GM12878 (cell line): ENCODE measurements at regions of chrX and their contacts with region 1.

Region 1: GRCh38 chrX:3713225-3713936 is at the start of gene PRKX:
- DNase-seq: peak; percentile 13
- ATAC-seq: peak; percentile 86
- H3K4me3 ChIP-seq: peak within 1 kb of the TSS; percentile 83
- H3K27ac ChIP-seq: peak within 1 kb of the TSS; percentile 81
- H3K4me1 ChIP-seq: peaks cover 5% of the 10 kb centered on the region
- H3K27me3 ChIP-seq: no peaks in the 10 kb centered on the region
- CTCF ChIP-seq: no peak
- EP300 ChIP-seq: no peak
- POLR2A ChIP-seq: peak; percentile 81
- RAD21 ChIP-seq: no peak
- polyA plus RNA-seq, gene PRKX: 3.9 to 5.4 TPM

Region 2: DNA sequence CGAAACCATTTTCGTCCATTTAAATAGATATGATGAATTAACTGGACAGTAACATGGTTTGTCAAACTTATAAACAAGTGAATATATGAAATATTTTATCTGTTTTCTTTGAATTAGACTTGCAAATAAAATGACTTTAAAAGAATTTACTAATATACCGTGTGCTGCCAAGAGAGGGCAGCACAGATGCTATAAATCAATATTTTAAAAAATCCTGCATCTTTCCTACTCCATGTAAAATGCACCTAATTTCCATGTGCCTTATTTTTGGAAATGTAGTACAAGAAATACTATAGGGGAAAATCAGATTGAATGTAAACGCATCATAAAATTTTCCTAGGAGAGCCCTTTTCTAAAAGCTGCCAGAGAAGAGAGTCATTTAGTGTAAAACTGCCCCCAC is 62.1 kb before region 1 on chrX:
- CTCF ChIA-PET with region 1: interaction called, 14 read pairs
- POLR2A ChIA-PET with region 1: no interaction called
- RAD21 ChIA-PET with region 1: interaction called, 4 read pairs
- SMC1A ChIA-PET with region 1: interaction called, 7 read pairs
- in situ Hi-C with region 1: no loop called
- intact Hi-C with region 1: loop called (anchors 5 kb)
- DNase-seq: no peak
- ATAC-seq: peak; percentile 45; the same call in 1 of the 3 replicates
- H3K4me3 ChIP-seq: no peak overlapping the region
- H3K27ac ChIP-seq: no peak overlapping the region
- H3K4me1 ChIP-seq: no peaks in the 10 kb centered on the region
- H3K27me3 ChIP-seq: no peaks in the 10 kb centered on the region
- CTCF ChIP-seq: peak; percentile 46 to 63 (median 55); a peak in 5 of 6 replicates
- EP300 ChIP-seq: no peak
- POLR2A ChIP-seq: no peak
- RAD21 ChIP-seq: peak; percentile 65

Region 3: GRCh38 chrX:3659761-3660160 is 53.6 kb before region 1 on chrX:
- CTCF ChIA-PET with region 1: no interaction called
- POLR2A ChIA-PET with region 1: interaction called, 4 read pairs
- RAD21 ChIA-PET with region 1: no interaction called
- SMC1A ChIA-PET with region 1: no interaction called
- in situ Hi-C with region 1: no loop called
- intact Hi-C with region 1: loop called (anchors 5 kb)
- DNase-seq: no peak
- ATAC-seq: no peak
- H3K4me3 ChIP-seq: no peak overlapping the region
- H3K27ac ChIP-seq: no peak overlapping the region
- H3K4me1 ChIP-seq: peaks cover 6% of the 10 kb centered on the region
- H3K27me3 ChIP-seq: no peaks in the 10 kb centered on the region
- CTCF ChIP-seq: no peak
- EP300 ChIP-seq: no peak
- POLR2A ChIP-seq: no peak
- RAD21 ChIP-seq: no peak

Region 4: DNA sequence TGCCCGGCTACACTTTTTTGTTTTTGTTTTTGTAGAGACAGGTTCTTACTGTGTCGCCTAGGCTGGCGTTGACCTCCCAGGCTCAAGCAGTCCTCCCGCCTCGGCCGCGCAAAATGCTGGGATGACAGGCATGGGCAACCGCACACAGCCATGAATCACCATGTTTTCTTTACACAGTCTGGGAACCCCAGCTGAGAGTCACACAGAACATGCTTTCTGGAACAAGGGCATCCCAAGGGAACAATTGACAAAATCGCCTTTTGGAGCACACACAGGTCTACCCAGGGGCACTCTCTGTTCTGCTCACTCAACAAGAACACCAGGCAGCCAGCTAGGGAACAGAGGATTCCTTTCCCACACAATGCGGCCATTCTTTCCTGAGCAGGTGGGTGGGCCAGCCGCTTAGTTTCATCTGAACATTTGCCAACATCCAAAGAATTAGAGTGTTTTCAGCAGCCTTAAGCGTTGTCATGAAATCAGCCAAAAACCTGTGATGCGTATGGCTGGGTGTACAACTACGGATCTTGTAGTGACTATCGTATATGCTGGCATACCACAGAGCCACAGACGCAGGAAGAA is 15.6 kb before region 1 on chrX:
- CTCF ChIA-PET with region 1: interaction called, 10 read pairs
- POLR2A ChIA-PET with region 1: interaction called, 10 read pairs
- RAD21 ChIA-PET with region 1: interaction called, 17 read pairs
- SMC1A ChIA-PET with region 1: interaction called, 20 read pairs
- in situ Hi-C with region 1: no loop called
- intact Hi-C with region 1: loop called (anchors 1 kb)
- DNase-seq: no peak
- ATAC-seq: no peak
- H3K4me3 ChIP-seq: no peak overlapping the region
- H3K27ac ChIP-seq: no peak overlapping the region
- H3K4me1 ChIP-seq: peaks cover 5% of the 10 kb centered on the region; the same call in 1 of the 2 replicates
- H3K27me3 ChIP-seq: no peaks in the 10 kb centered on the region
- CTCF ChIP-seq: no peak
- EP300 ChIP-seq: no peak
- POLR2A ChIP-seq: no peak
- RAD21 ChIP-seq: no peak

Region 5: GRCh38 chrX:3738509-3738908 is 25.1 kb after region 1 on chrX:
- CTCF ChIA-PET with region 1: no interaction called
- POLR2A ChIA-PET with region 1: no interaction called
- RAD21 ChIA-PET with region 1: no interaction called
- SMC1A ChIA-PET with region 1: no interaction called
- in situ Hi-C with region 1: no loop called
- intact Hi-C with region 1: no loop called
- DNase-seq: no peak
- ATAC-seq: no peak
- H3K4me3 ChIP-seq: no peak overlapping the region
- H3K27ac ChIP-seq: no peak overlapping the region
- H3K4me1 ChIP-seq: no peaks in the 10 kb centered on the region
- H3K27me3 ChIP-seq: no peaks in the 10 kb centered on the region
- CTCF ChIP-seq: no peak
- EP300 ChIP-seq: no peak
- POLR2A ChIP-seq: no peak
- RAD21 ChIP-seq: no peak